ENCODE measurements at regions of chr15 and their contacts with region 1.

Region 1: GRCh38 chr15:48645558-48646330 is at the start of gene FBN1:
- DNase-seq: peak; percentile 83
- ATAC-seq: peak; percentile 90
- total RNA-seq, gene FBN1: 41.0 TPM

Region 2: GRCh38 chr15:48507416-48508065 is 138.2 kb before region 1 on chr15:
- intact Hi-C with region 1: loop called (anchors 5 kb)
- DNase-seq: no peak
- ATAC-seq: peak; percentile 65

Region 3: DNA sequence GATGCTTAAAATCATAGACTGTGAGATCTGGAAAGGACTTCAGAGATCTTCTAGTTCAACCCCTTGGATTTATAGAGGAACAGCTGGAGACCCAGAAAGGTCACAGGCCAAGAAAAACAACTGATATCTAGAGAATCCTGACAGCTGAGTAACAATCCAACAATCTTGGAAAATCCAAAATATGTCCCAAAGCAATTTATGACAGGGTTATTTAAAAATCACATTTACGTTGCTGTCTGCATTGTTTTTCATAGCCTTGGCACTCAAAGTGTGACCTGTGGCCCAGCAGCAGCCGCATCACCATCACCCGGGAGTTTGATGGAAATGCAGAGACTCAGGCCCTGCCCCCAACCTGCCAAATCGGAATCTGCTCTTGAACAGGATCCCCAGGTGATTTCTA is 79.1 kb before region 1 on chr15:
- intact Hi-C with region 1: no loop called
- DNase-seq: no peak
- ATAC-seq: no peak

Region 4: DNA sequence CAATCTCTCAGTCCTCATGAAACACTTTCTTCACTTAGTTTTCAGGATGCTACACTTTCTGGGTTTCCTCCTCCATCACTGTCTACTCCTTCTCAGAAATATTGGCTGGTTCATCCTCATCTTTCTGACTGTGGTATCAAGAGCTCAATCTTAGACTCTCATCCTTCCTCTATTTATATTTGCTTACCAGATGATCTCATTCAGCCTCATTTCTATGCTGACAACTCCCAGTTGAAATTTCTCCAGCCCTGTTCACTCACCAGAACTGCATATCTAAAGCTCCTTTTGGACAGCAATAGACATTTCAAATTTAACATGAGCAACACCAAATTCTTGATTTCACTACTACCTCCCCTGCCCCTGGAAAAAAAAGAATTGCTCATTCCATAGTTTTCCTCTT is 47.7 kb after region 1 on chr15:
- intact Hi-C with region 1: loop called (anchors 5 kb)
- DNase-seq: no peak
- ATAC-seq: peak; percentile 50

Region 5: DNA sequence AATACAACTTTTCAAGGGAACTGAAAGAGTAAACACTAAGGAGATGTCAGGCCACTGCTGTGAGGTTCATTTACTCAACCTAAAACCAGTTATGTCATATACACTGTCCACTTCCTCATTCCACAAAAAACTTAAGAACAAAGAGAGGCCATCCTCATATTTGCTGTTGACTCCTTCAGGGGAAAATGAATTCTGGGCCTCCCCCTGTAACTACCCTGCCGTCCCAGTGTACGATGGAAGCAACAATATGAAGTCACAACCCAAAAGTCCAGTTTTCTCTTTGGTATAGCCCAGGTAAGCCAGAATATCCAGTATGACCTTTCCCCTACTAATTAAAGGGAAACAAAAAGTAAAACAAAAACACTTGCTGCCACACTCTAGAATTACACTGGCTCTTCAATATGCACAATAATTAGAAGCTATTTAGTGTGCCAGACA is 149.0 kb after region 1 on chr15:
- intact Hi-C with region 1: loop called (anchors 5 kb)
- DNase-seq: no peak
- ATAC-seq: peak; percentile 50

Measured in Right ventricle myocardium inferior (tissue), 1 donor.